ENCODE measurements at regions of chr13 and their contacts with region 1.

Region 1: GRCh38 chr13:51797664-51798488 is 6.1 kb downstream of the DHRS12 start:
- DNase-seq: peak; percentile 52
- H3K4me3 Mint-ChIP-seq: no peak overlapping the region
- H3K27ac Mint-ChIP-seq: no peak overlapping the region
- H3K4me1 Mint-ChIP-seq: peaks cover 52% of the 10 kb centered on the region
- H3K27me3 Mint-ChIP-seq: no peaks in the 10 kb centered on the region

Region 2: GRCh38 chr13:51125498-51126226 is 672.2 kb before region 1 on chr13:
- intact Hi-C with region 1: loop called (anchors 1 kb)
- DNase-seq: peak; percentile 25
- H3K4me3 Mint-ChIP-seq: no peak overlapping the region
- H3K27ac Mint-ChIP-seq: no peak overlapping the region
- H3K4me1 Mint-ChIP-seq: peaks cover 12% of the 10 kb centered on the region
- H3K27me3 Mint-ChIP-seq: peaks cover 9% of the 10 kb centered on the region

Region 3: GRCh38 chr13:51222037-51222685 is 575.7 kb before region 1 on chr13 and contains the start of gene FAM124A:
- intact Hi-C with region 1: loop called (anchors 2 kb)
- DNase-seq: peak; percentile 41
- H3K4me3 Mint-ChIP-seq: peak within 1 kb of the TSS; percentile 79
- H3K27ac Mint-ChIP-seq: peak within 1 kb of the TSS; percentile 52
- H3K4me1 Mint-ChIP-seq: no peaks in the 10 kb centered on the region
- H3K27me3 Mint-ChIP-seq: peaks cover 59% of the 10 kb centered on the region
- total RNA-seq, gene FAM124A: 0.67 and 0.91 TPM in 2 replicates

Region 4: DNA sequence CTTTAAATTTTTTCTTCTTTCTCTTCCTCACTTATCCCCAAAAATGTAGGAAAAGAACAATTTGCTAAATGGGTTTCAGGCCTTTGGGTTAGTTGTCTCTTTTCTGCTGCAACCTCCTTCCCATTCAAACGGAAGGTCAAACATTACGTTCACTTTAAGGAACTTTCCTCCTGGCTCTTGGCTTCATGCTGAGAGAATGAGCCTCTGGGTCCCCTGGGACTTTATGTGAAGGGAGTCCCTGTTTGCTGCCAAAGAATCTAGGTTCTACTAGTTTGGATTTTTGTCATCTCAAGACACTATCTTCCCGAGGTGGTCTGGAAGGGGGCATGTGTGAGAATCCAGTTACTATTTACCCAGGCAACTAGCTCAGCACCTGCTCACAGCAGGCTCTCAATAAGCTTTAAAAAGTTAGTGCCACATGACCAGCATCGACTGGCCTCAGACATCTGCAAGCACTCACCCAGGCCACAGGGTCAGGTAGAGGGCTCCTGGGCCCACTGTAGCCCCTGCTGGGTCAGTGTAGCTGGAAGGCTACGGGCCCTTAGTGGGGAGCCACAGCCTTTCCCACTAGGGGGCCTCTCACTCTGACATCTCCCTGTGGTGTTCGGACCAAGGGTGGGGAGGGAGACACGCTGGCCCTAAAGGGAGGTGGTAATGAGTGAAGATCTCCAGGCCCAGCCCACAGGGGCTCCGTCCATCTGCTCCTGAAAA is 535.2 kb before region 1 on chr13:
- intact Hi-C with region 1: loop called (anchors 1 kb)
- DNase-seq: no peak
- H3K4me3 Mint-ChIP-seq: no peak overlapping the region
- H3K27ac Mint-ChIP-seq: no peak overlapping the region
- H3K4me1 Mint-ChIP-seq: no peaks in the 10 kb centered on the region
- H3K27me3 Mint-ChIP-seq: no peaks in the 10 kb centered on the region

Region 5: GRCh38 chr13:51286135-51287002 is 511.5 kb before region 1 on chr13:
- intact Hi-C with region 1: loop called (anchors 5 kb)
- DNase-seq: peak; percentile 57
- H3K4me3 Mint-ChIP-seq: no peak overlapping the region
- H3K27ac Mint-ChIP-seq: no peak overlapping the region
- H3K4me1 Mint-ChIP-seq: peaks cover 20% of the 10 kb centered on the region
- H3K27me3 Mint-ChIP-seq: peaks cover 3% of the 10 kb centered on the region

Region 6: DNA sequence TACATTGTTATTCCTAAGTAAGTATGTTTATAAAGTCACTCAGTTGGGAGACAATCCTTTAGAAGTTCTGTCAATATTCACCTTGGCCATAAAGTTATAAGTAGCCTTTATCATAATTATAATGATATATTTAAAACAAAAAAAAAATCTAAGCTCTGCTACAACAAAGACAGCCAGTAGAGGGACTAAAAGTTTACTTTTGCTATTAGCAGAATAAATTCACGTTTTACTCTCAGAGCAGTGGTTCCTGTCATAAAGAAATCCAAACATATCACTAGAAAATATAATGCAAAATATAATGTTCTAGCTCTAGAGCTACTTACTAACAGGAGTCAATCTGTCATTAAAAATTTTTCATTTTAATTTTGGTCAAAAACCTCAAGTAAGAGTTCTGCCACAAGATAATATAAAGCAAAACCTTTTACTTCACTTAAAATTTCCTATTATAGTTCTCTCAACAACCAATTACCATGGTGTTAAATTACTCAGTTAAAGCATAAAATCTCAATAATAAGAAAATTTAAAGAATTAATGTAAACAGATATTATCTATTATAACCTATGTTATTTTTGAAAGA is 362.8 kb before region 1 on chr13:
- intact Hi-C with region 1: loop called (anchors 1 kb)
- DNase-seq: no peak
- H3K4me3 Mint-ChIP-seq: no peak overlapping the region
- H3K27ac Mint-ChIP-seq: no peak overlapping the region
- H3K4me1 Mint-ChIP-seq: peaks cover 5% of the 10 kb centered on the region
- H3K27me3 Mint-ChIP-seq: no peaks in the 10 kb centered on the region

Region 7: DNA sequence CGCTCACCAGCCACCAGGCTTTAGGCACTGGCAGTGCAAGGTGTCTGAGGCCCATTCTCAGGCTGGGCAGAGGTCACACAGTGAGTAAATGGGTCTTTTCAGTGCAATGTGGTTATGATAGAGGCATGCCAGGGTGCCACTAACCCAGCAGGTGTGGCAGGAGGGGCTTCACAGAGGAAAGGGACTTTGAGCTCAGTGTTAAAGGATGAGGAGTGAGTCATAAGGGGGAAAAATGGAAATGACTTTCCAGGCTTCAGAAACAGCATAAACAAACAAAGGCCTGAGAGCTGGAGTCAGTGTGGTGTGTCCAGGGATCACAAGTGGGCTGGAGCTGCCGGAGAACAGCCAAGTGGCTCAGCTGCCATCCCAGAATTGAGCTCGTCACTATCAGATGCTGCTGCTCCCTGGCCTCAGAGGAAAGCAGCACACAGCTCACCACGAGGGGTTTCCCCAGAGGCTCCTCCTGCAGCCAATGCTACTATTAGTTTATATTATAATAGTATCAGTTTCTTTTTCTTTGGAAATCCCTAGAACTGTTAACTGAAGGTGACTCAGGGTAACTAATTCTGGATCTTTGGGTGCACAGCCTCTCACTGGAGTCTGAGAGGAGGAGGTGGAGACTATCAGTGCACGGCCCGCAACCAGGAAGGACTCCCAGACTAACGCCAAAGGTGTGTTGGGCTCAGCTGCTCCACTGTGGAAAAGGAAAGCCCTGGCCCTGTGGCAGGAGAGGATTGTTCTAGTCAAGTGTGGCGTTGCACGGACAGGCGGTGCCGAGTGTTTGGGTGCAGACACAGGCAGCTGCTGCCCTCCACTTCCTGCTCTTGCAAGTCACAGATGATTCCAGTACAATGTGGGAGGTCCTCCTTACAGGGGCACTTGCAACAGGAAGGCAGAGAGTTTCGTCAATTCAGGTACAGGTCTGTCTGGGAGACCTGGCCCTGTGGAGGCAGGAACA is 33.4 kb before region 1 on chr13:
- intact Hi-C with region 1: loop called (anchors 1 kb)
- DNase-seq: peak; percentile 43
- H3K4me3 Mint-ChIP-seq: peak overlapping the region; percentile 79
- H3K27ac Mint-ChIP-seq: peak overlapping the region; percentile 96
- H3K4me1 Mint-ChIP-seq: peaks cover 41% of the 10 kb centered on the region
- H3K27me3 Mint-ChIP-seq: no peaks in the 10 kb centered on the region